Mammary epithelial cell (primary cell): ENCODE measurements at regions of chr19 and their contacts with region 1.

Region 1: DNA sequence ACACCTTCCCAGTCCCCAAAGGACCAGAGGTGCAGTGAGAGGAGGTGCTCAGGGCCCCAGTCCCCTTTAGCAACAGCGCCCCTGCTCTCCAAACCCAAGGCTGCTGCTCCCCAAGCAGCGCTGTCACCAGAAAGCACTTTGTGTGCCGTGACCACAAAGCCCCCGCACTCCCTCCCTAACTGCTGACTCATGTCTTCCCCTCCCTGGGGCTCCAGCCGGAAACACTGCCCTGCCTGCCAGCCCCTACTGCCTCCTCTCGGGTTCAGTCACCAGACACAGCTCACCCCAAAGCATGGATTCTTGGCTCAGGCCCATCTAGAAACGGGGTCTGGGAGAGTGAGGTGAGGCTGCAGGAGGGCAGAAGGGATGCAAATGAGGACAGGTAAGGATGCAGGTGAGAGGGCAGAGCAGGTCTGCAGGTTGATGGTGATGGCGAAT is 4.9 kb upstream of the TNFSF14 start:
- DNase-seq: peak; percentile 72
- H3K4me3 ChIP-seq: no peak overlapping the region
- H3K27ac ChIP-seq: no peak overlapping the region
- H3K4me1 ChIP-seq: peaks cover 20% of the 10 kb centered on the region
- H3K27me3 ChIP-seq: no peaks in the 10 kb centered on the region
- CTCF ChIP-seq: peak in 1 of 2 donors; percentile 4

Region 2: DNA sequence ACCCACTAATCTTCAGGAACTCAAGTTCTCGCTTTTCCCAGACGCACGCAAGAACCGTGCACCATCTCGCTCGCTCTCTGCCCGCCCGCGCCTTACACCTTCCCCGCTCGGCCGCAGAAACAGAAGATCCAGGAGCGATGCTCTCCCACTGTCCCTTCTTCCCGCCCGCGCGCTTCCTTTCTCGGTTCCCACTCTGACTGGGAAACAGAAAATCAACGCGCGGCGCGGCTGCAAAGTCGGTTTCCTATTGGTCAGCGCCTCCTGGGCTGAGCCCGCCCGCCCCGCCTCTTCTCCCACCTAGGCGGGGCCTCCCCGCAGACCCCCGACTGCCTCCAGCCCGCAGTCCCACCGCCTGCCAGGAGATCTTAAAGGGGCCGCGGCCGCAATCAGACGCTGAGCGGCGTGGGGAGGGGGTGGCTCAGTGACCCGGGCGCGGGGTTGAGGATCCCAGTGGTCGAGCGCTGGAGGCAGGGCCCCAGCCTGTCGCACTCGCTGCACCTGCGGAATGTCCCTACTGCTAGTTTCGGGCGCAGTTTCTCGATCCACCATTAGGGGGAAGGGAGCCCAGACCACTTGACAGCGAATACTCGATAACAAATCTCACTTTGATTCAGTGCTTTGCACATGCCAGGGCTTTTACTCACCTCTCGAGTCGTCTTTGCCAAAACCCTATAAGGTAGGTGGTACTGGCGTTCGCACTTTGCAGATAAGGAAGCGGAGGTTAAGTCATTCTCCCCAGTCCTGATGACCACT is 214.6 kb before region 1 on chr19:
- CTCF ChIA-PET with region 1: no interaction called
- dilution Hi-C with region 1: loop called (anchors 5 kb)
- in situ Hi-C with region 1: no loop called
- intact Hi-C with region 1: no loop called
- DNase-seq: peak; percentile 99
- H3K4me3 ChIP-seq: peak overlapping the region; percentile 47 to 85 (median 58)
- H3K27ac ChIP-seq: peak overlapping the region; percentile 55
- H3K4me1 ChIP-seq: peaks cover 6% of the 10 kb centered on the region
- H3K27me3 ChIP-seq: no peaks in the 10 kb centered on the region
- CTCF ChIP-seq: peak; percentile 36 to 46

Region 3: GRCh38 chr19:6572217-6572616 is 102.7 kb before region 1 on chr19:
- CTCF ChIA-PET with region 1: no interaction called
- dilution Hi-C with region 1: loop called (anchors 5 kb)
- in situ Hi-C with region 1: no loop called
- intact Hi-C with region 1: no loop called
- DNase-seq: no peak
- H3K4me3 ChIP-seq: no peak overlapping the region
- H3K27ac ChIP-seq: no peak overlapping the region
- H3K4me1 ChIP-seq: peaks cover 14% of the 10 kb centered on the region
- H3K27me3 ChIP-seq: no peaks in the 10 kb centered on the region
- CTCF ChIP-seq: no peak

Region 4: DNA sequence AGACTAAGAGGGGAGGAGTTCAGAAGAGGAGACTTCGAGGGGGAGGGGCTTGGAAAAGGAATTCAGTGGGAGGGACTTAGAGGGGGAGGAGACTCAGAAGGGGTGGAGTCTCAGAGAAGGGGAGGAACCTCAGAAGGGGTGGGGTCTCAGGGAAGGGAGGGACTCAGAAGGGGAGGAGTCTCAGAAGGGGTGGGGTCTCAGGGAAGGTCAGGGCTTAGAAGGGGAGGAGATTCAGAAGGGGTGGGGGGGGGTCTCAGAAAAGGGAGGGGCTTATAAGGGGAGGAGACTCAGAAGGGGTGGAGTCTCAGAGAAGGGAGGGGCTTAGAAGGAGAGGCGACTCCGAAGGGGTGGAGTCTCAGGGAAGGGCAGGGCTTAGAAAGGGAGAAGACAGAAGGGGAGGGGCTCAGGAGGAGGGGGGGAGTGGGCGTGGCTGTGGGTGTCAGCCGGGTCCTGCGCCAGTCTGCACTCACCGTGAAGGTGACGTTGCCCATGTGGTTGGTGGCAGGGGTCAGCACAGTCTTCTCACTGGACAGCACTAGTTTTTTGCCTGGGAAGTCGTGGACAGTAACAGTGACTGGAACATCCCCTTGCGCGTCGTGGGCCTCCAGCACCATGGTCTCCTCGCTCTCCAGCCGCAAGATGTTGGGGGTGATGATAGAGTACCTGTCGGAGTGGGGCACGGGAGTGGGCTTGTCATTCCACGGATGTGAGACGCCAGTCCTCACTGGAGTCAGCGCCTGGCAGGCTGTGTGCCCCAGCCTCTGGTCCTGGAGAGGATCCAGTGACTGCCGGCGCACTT is 44.1 kb after region 1 on chr19:
- CTCF ChIA-PET with region 1: no interaction called
- dilution Hi-C with region 1: loop called (anchors 5 kb)
- in situ Hi-C with region 1: no loop called
- intact Hi-C with region 1: no loop called
- DNase-seq: peak; percentile 23
- H3K4me3 ChIP-seq: peak overlapping the region in 1 of 3 experiments; percentile 31
- H3K27ac ChIP-seq: no peak overlapping the region
- H3K4me1 ChIP-seq: peaks cover 35% of the 10 kb centered on the region
- H3K27me3 ChIP-seq: no peaks in the 10 kb centered on the region
- CTCF ChIP-seq: no peak

Region 5: DNA sequence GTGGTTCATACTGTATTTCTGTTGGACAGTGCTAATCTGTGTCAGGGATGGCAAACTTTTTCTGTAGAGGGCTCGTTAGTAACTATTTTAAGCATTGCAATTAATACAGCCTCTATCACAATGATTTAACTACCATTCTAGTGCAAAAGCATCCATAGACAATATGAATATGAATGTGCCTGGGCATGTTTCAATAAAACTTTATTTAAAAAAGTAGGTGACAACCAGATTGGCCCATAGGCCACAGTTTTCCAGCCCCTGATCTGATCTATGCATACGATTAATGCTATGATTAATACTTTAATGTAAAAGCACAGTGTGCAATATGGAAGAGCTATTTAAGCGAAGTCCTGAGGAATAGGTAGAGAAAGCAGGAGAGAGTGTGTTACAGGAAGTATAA is 242.1 kb after region 1 on chr19:
- CTCF ChIA-PET with region 1: no interaction called
- dilution Hi-C with region 1: loop called (anchors 5 kb)
- in situ Hi-C with region 1: no loop called
- intact Hi-C with region 1: no loop called
- DNase-seq: no peak
- H3K4me3 ChIP-seq: no peak overlapping the region
- H3K27ac ChIP-seq: no peak overlapping the region
- H3K4me1 ChIP-seq: no peaks in the 10 kb centered on the region
- H3K27me3 ChIP-seq: no peaks in the 10 kb centered on the region
- CTCF ChIP-seq: no peak